A549 (cell line): ENCODE measurements at regions of chr17 and their contacts with region 1.

Region 1: DNA sequence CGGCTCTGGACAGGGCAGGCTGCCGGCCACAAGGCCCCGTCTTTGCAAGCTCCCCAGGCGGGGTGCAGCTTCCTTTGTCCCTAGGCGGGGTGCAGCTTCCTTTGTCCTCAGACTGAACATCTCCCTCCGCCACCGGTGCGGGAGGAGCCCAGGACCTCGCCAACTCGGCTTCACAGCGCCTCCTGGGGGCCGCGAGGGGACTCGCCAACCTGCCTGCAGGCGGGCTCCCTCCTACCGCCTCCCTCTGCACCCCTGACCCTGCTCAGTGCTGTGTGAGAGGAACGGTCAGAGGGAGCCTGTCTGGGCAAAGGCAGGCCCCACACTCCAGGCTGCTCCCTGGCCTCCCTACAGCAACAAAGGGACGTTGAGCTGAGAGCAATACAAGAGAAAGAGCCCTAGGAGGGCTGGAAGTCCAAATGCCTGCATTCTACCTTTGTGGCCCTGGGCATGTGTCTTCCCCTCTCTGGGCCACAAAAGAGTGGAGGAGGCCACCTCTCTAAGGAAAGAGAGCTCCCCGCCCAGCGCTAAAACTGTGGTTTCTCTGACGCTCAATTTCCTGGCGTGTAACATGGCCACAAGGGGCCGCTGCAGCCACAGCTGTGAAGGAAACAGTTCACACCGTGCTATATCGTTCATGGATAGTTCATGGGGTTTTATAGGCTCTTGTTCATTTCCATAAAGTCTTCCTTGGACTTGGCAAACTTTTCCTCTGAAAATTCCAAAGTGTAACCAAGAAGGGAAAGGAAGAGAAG is 20.9 kb upstream of the KRT19 start:
- DNase-seq: peak; percentile 94 to 96
- ATAC-seq: peak; percentile 79 to 91
- H3K4me3 ChIP-seq: peak overlapping the region; percentile 33
- H3K27ac ChIP-seq: peak overlapping the region; percentile 89 to 96
- H3K4me1 ChIP-seq: peaks cover 40% of the 10 kb centered on the region
- CTCF ChIP-seq: peak; percentile 99
- EP300 ChIP-seq: no peak
- POLR2A ChIP-seq: peak; percentile 16; the same call in 1 of the 2 replicates
- RAD21 ChIP-seq: peak; percentile 93 to 97

Region 2: GRCh38 chr17:40846515-40847155 is 702.4 kb before region 1 on chr17:
- CTCF ChIA-PET with region 1: interaction called, 26 read pairs
- POLR2A ChIA-PET with region 1: no interaction called
- DNase-seq: no peak
- ATAC-seq: peak in 1 of 2 experiments; percentile 45; a peak in 1 of 6 replicates
- H3K4me3 ChIP-seq: no peak overlapping the region
- H3K27ac ChIP-seq: no peak overlapping the region
- H3K4me1 ChIP-seq: peaks cover 32% of the 10 kb centered on the region
- CTCF ChIP-seq: no peak
- EP300 ChIP-seq: no peak
- POLR2A ChIP-seq: no peak
- RAD21 ChIP-seq: no peak

Region 3: GRCh38 chr17:40922239-40922638 is 626.8 kb before region 1 on chr17:
- CTCF ChIA-PET with region 1: interaction called, 246 read pairs
- POLR2A ChIA-PET with region 1: no interaction called
- DNase-seq: peak; percentile 80 to 82
- ATAC-seq: peak; percentile 91 to 95
- H3K4me3 ChIP-seq: no peak overlapping the region
- H3K27ac ChIP-seq: peak overlapping the region; percentile 78 to 81
- H3K4me1 ChIP-seq: peaks cover 14% of the 10 kb centered on the region
- CTCF ChIP-seq: no peak
- EP300 ChIP-seq: no peak
- POLR2A ChIP-seq: no peak
- RAD21 ChIP-seq: no peak

Region 4: DNA sequence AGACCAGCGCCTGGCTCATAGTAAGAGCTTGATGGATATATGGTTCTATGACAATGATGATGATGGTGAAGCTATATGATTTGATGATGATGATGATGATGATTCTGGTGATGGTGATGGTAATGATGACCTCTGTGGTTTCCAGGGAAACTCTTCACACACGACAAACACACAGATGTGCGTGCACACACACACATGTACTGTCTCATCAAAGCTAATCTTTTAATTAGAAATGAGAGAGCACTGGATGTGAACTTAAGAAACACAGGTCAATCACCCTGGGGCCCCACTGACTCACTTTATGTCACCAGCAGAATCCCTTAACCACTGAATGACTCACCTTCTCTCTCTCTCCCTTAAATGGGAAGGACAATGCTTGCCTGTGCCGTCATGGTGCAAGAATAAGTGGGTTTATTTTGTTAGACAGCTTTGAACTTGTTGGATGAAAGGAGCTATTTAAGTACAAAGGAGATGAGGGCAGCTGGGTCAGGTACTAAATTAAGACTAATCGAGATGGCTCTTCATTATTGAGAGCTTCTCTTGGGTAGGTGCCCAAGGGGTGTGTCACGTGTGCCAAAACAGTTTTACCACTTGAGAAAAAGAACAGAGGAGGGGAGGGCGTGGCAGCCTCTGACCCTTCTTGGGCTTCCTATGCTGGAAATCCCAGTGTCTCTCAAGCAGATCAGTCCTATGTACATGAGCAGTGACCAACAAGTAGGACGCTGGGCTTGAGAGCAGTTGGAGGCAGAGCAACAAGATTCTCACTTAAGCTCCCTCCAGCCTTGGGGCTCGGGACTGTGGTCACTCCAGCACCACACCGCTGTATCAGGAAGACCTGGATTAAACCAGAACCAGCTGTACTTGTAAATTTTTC is 145.0 kb before region 1 on chr17:
- CTCF ChIA-PET with region 1: interaction called, 60 read pairs
- POLR2A ChIA-PET with region 1: no interaction called
- DNase-seq: peak; percentile 77 to 82
- ATAC-seq: peak; percentile 75 to 81; a peak in 5 of 6 replicates
- H3K4me3 ChIP-seq: no peak overlapping the region
- H3K27ac ChIP-seq: peak overlapping the region; percentile 34 to 66; a peak in 5 of 6 replicates
- H3K4me1 ChIP-seq: peaks cover 18% of the 10 kb centered on the region
- CTCF ChIP-seq: no peak
- EP300 ChIP-seq: peak in 1 of 2 experiments; percentile 46; a peak in 1 of 5 replicates
- POLR2A ChIP-seq: no peak
- RAD21 ChIP-seq: no peak

Region 5: GRCh38 chr17:41521574-41522261 is 27.3 kb before region 1 on chr17:
- CTCF ChIA-PET with region 1: interaction called, 163 read pairs
- POLR2A ChIA-PET with region 1: interaction called, 3 read pairs
- DNase-seq: peak; percentile 76 to 83
- ATAC-seq: peak; percentile 52 to 78; a peak in 5 of 6 replicates
- H3K4me3 ChIP-seq: no peak overlapping the region
- H3K27ac ChIP-seq: peak overlapping the region; percentile 60 to 82
- H3K4me1 ChIP-seq: peaks cover 29% of the 10 kb centered on the region
- CTCF ChIP-seq: no peak
- EP300 ChIP-seq: no peak
- POLR2A ChIP-seq: no peak
- RAD21 ChIP-seq: no peak

Region 6: GRCh38 chr17:41624208-41625101 is 75.4 kb after region 1 on chr17 and contains the start of gene KRT17:
- CTCF ChIA-PET with region 1: interaction called, 22 read pairs
- POLR2A ChIA-PET with region 1: no interaction called
- DNase-seq: no peak
- ATAC-seq: peak in 1 of 2 experiments; percentile 60; a peak in 2 of 6 replicates
- H3K4me3 ChIP-seq: no peak within 1 kb of the TSS
- H3K27ac ChIP-seq: no peak within 1 kb of the TSS
- H3K4me1 ChIP-seq: peaks cover 9% of the 10 kb centered on the region; the same call in 2 of the 3 replicates
- CTCF ChIP-seq: no peak
- EP300 ChIP-seq: no peak
- POLR2A ChIP-seq: no peak
- RAD21 ChIP-seq: no peak
- polyA plus RNA-seq, gene KRT17: 0.78 and 1.2 TPM in 2 replicates

Region 7: DNA sequence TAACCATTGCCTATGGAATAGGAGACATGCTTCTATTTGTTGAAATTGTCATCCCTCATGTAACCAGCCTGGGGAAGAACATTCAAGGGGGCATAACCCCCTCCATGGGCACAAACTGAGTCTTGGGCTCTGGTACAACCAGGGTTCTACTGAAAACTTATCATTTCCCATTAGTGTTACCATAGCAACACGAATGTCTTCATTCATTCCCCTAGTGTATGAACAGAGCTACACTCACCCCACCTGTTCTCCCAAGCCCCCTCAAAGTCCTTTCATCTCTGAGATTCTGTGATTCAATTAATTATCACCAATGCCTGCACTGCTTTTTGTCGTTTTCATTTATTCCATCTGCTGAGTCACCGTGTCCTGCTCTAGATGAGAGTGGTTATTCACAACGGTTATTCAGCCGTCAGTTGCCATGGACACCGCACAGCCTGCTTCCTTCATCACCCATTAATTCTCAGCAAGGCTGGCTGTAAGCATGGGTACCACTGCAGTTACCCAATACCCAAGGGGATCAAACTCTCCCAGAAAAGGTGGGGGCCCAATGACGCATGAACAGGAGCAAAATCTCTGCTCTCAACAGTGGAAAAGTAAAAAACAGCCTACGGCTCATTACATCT is 161.6 kb after region 1 on chr17:
- CTCF ChIA-PET with region 1: no interaction called
- POLR2A ChIA-PET with region 1: no interaction called
- DNase-seq: peak in 1 of 2 experiments; percentile 62
- ATAC-seq: peak; percentile 20 to 27; a peak in 2 of 6 replicates
- H3K4me3 ChIP-seq: no peak overlapping the region
- H3K27ac ChIP-seq: no peak overlapping the region
- H3K4me1 ChIP-seq: peaks cover 5% of the 10 kb centered on the region
- CTCF ChIP-seq: no peak
- EP300 ChIP-seq: no peak
- POLR2A ChIP-seq: no peak
- RAD21 ChIP-seq: no peak